Calu3 (cell line): ENCODE measurements at regions of chr5 and their contacts with region 1.

Region 1: GRCh38 chr5:14108170-14108996 is 34.8 kb upstream of the TRIO start:
- DNase-seq: peak; percentile 64
- H3K4me3 Mint-ChIP-seq: peak overlapping the region; percentile 1
- H3K27ac Mint-ChIP-seq: no peak overlapping the region
- H3K4me1 Mint-ChIP-seq: peaks cover 37% of the 10 kb centered on the region
- H3K27me3 Mint-ChIP-seq: no peaks in the 10 kb centered on the region
- CTCF ChIP-seq: peak; percentile 57

Region 2: GRCh38 chr5:14144586-14145434 is 36.4 kb after region 1 on chr5:
- CTCF ChIA-PET with region 1: no interaction called
- intact Hi-C with region 1: no loop called
- DNase-seq: peak; percentile 66
- H3K4me3 Mint-ChIP-seq: peak overlapping the region; percentile 81
- H3K27ac Mint-ChIP-seq: peak overlapping the region; percentile 84
- H3K4me1 Mint-ChIP-seq: peaks cover 38% of the 10 kb centered on the region
- H3K27me3 Mint-ChIP-seq: no peaks in the 10 kb centered on the region
- CTCF ChIP-seq: no peak

Region 3: GRCh38 chr5:14270209-14270702 is 161.9 kb after region 1 on chr5:
- CTCF ChIA-PET with region 1: interaction called, 4 read pairs
- intact Hi-C with region 1: loop called (anchors 2 kb)
- DNase-seq: peak; percentile 52
- H3K4me3 Mint-ChIP-seq: no peak overlapping the region
- H3K27ac Mint-ChIP-seq: peak overlapping the region; percentile 56
- H3K4me1 Mint-ChIP-seq: peaks cover 66% of the 10 kb centered on the region
- H3K27me3 Mint-ChIP-seq: no peaks in the 10 kb centered on the region
- CTCF ChIP-seq: peak; percentile 70

Region 4: GRCh38 chr5:14351845-14352712 is 243.7 kb after region 1 on chr5:
- CTCF ChIA-PET with region 1: interaction called, 4 read pairs
- intact Hi-C with region 1: loop called (anchors 2 kb)
- DNase-seq: peak; percentile 65
- H3K4me3 Mint-ChIP-seq: no peak overlapping the region
- H3K27ac Mint-ChIP-seq: no peak overlapping the region
- H3K4me1 Mint-ChIP-seq: no peaks in the 10 kb centered on the region
- H3K27me3 Mint-ChIP-seq: no peaks in the 10 kb centered on the region
- CTCF ChIP-seq: peak; percentile 81